ENCODE measurements at regions of chr7 and their contacts with region 1.

Region 1: GRCh38 chr7:108497082-108497725 is 28.7 kb downstream of the PNPLA8 start:
- DNase-seq: peak in 12 of 14 experiments; percentile 7 to 73 (median 18)
- ATAC-seq: peak; percentile 74
- H3K4me3 ChIP-seq: no peak overlapping the region
- H3K4me3 Mint-ChIP-seq: no peak overlapping the region
- H3K27ac ChIP-seq: no peak overlapping the region
- H3K27ac Mint-ChIP-seq: no peak overlapping the region
- H3K4me1 ChIP-seq: no peaks in the 10 kb centered on the region
- H3K4me1 Mint-ChIP-seq: no peaks in the 10 kb centered on the region
- H3K27me3 ChIP-seq: no peaks in the 10 kb centered on the region
- H3K27me3 Mint-ChIP-seq: no peaks in the 10 kb centered on the region
- CTCF ChIP-seq: peak; percentile 97

Region 2: DNA sequence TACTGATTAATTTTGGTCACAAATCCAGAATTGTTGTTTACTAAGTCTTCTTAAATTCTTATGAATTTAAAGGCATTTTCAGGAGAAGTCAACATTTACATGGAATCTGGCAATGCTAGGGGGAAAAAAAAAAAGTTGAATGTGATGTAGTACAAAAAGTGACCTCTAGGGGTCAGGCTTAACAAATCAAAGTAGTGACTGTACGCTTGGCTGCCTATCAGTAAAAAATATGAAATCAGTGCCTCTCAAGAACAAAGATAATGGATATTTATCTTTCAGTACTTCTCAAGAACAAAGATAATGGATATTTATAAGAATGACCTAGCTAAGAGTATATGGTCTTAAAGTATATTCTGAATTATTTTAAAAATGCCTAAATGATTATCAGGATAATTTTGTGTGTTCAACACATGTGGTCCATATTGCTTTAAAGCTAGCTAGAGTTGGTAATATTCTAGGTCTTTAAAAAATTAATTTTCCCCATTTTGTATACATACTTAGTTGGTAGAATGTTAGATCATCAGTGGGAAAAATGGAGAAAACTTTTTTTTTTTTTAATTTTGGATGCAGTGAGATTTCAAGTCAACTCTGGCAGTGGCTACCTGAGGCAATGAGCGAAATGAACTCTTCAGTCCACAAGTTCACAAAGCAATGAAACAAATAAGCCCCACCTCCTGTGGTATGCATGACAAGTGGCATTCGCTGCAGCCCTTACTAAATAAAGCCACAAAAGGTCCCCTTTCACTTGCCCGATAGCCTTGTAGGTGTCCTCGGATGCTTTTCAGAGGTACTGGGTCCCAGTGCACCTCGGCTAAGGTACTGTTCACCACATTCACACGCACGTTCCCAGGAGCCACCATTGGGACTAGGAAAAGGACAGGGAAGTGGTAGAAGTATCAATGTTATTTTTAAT is 315.9 kb before region 1 on chr7:
- CTCF ChIA-PET with region 1: interaction called, 5 read pairs
- POLR2A ChIA-PET with region 1: no interaction called
- intact Hi-C with region 1: loop called (anchors 1 to 2 kb)
- DNase-seq: peak in 3 of 14 experiments; percentile 40 to 65 (median 59)
- ATAC-seq: peak; percentile 62
- H3K4me3 ChIP-seq: no peak overlapping the region
- H3K4me3 Mint-ChIP-seq: no peak overlapping the region
- H3K27ac ChIP-seq: no peak overlapping the region
- H3K27ac Mint-ChIP-seq: no peak overlapping the region
- H3K4me1 ChIP-seq: no peaks in the 10 kb centered on the region
- H3K4me1 Mint-ChIP-seq: no peaks in the 10 kb centered on the region
- H3K27me3 ChIP-seq: no peaks in the 10 kb centered on the region
- H3K27me3 Mint-ChIP-seq: peaks cover 5% of the 10 kb centered on the region
- CTCF ChIP-seq: peak; percentile 87

Region 3: DNA sequence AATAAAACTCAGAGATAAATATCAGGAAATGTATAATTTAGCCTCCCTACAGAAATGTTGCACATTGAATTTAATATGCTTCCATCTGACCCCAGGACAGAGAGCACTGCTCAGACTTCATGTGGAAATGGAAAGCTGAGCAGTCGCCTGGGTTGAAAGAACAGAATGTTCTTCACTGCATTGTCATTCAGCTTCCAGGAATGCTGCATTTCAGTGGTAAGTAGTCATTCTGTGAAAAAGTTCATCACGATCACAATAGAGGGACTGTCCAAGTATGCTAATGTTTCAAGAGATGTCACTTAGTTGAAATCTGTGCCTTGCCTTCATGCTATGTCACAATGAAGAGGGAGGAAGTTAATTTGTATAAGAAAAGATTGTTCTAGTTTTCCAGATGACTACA is 188.3 kb before region 1 on chr7:
- CTCF ChIA-PET with region 1: no interaction called
- POLR2A ChIA-PET with region 1: no interaction called
- intact Hi-C with region 1: no loop called
- DNase-seq: no peak
- ATAC-seq: no peak
- H3K4me3 ChIP-seq: no peak overlapping the region
- H3K4me3 Mint-ChIP-seq: no peak overlapping the region
- H3K27ac ChIP-seq: no peak overlapping the region
- H3K27ac Mint-ChIP-seq: no peak overlapping the region
- H3K4me1 ChIP-seq: no peaks in the 10 kb centered on the region
- H3K4me1 Mint-ChIP-seq: no peaks in the 10 kb centered on the region
- H3K27me3 ChIP-seq: no peaks in the 10 kb centered on the region
- H3K27me3 Mint-ChIP-seq: peaks cover 3% of the 10 kb centered on the region
- CTCF ChIP-seq: no peak

Region 4: GRCh38 chr7:108452722-108453121 is 44.5 kb before region 1 on chr7:
- CTCF ChIA-PET with region 1: interaction called, 9 read pairs
- POLR2A ChIA-PET with region 1: interaction called, 7 read pairs
- intact Hi-C with region 1: loop called (anchors 1 to 2 kb)
- DNase-seq: peak in 3 of 14 experiments; percentile 4 to 54 (median 47)
- ATAC-seq: peak; percentile 67
- H3K4me3 ChIP-seq: no peak overlapping the region
- H3K4me3 Mint-ChIP-seq: peak overlapping the region; percentile 85
- H3K27ac ChIP-seq: no peak overlapping the region
- H3K27ac Mint-ChIP-seq: no peak overlapping the region
- H3K4me1 ChIP-seq: peaks cover 14% of the 10 kb centered on the region
- H3K4me1 Mint-ChIP-seq: peaks cover 23% of the 10 kb centered on the region
- H3K27me3 ChIP-seq: peaks cover 16 to 46% of the 10 kb centered on the region in 2 experiments
- H3K27me3 Mint-ChIP-seq: peaks cover 71% of the 10 kb centered on the region
- CTCF ChIP-seq: peak; percentile 67

Region 5: DNA sequence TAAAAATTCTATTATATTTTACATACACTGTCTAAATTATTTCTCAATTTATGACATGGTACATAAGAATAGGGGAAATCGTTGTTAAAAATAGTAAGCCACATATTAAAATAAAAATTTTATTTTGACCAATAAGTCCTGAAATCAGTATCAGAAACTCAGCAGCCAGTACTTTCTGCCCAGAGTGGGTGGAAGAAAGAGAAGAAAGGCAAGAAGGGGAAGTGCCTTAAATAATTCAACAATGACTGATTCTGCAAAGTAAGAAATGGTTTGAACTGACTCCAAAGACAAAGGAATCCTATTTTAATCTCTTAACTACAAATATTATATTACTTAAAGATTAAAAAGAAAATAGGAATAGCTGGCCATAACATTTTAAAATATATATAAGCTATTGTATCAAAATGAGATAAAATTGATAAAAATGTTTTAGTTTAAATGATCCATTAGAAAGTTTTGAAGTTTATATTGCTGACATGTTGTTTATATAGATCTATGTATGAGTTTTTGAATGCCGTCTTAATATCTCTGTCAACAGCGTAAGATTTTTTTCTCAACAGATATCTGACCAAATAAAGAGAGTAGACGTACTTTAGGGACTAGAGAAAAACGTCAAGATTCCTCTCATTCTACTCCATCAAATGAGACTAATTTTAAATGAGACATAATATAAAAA is 10.8 kb before region 1 on chr7:
- CTCF ChIA-PET with region 1: interaction called, 12 read pairs
- POLR2A ChIA-PET with region 1: no interaction called
- intact Hi-C with region 1: no loop called
- DNase-seq: no peak
- ATAC-seq: no peak
- H3K4me3 ChIP-seq: no peak overlapping the region
- H3K4me3 Mint-ChIP-seq: no peak overlapping the region
- H3K27ac ChIP-seq: no peak overlapping the region
- H3K27ac Mint-ChIP-seq: no peak overlapping the region
- H3K4me1 ChIP-seq: no peaks in the 10 kb centered on the region
- H3K4me1 Mint-ChIP-seq: no peaks in the 10 kb centered on the region
- H3K27me3 ChIP-seq: no peaks in the 10 kb centered on the region
- H3K27me3 Mint-ChIP-seq: no peaks in the 10 kb centered on the region
- CTCF ChIP-seq: no peak

Region 6: GRCh38 chr7:108525985-108526767 is 29.0 kb after region 1 on chr7 and contains the start of gene PNPLA8:
- CTCF ChIA-PET with region 1: interaction called, 10 read pairs
- POLR2A ChIA-PET with region 1: interaction called, 4 read pairs
- intact Hi-C with region 1: no loop called
- DNase-seq: peak; percentile 99 to 100 (median 100)
- ATAC-seq: peak; percentile 88
- H3K4me3 ChIP-seq: peak within 1 kb of the TSS; percentile 88
- H3K4me3 Mint-ChIP-seq: peak within 1 kb of the TSS; percentile 91
- H3K27ac ChIP-seq: peak within 1 kb of the TSS; percentile 92 to 99
- H3K27ac Mint-ChIP-seq: peak within 1 kb of the TSS; percentile 96
- H3K4me1 ChIP-seq: peaks cover 21% of the 10 kb centered on the region
- H3K4me1 Mint-ChIP-seq: peaks cover 49% of the 10 kb centered on the region
- H3K27me3 ChIP-seq: no peaks in the 10 kb centered on the region
- H3K27me3 Mint-ChIP-seq: no peaks in the 10 kb centered on the region
- CTCF ChIP-seq: no peak
- total RNA-seq, gene PNPLA8: 85.9 to 88.6 TPM

Region 7: DNA sequence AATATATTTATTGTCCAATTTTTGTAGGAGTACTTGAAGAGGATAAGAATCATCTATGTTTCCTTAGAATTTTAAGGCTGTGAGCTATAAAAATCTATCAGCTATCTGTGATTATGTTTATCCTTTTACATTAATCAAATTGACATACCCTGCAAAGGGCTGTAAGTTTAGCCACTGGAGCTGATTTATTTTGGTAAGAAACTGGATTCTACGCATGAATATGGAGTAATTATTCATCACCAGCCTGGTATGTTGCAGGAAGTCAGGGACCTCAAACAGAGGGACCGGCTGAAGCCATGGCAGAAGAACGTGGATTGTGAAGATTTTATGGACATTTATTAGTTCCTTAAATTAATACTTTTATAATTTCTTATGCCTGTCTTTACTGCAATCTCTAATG is 769.4 kb after region 1 on chr7:
- CTCF ChIA-PET with region 1: no interaction called
- POLR2A ChIA-PET with region 1: no interaction called
- intact Hi-C with region 1: no loop called
- DNase-seq: no peak
- ATAC-seq: no peak
- H3K4me3 ChIP-seq: no peak overlapping the region
- H3K4me3 Mint-ChIP-seq: no peak overlapping the region
- H3K27ac ChIP-seq: no peak overlapping the region
- H3K27ac Mint-ChIP-seq: no peak overlapping the region
- H3K4me1 ChIP-seq: no peaks in the 10 kb centered on the region
- H3K4me1 Mint-ChIP-seq: no peaks in the 10 kb centered on the region
- H3K27me3 ChIP-seq: no peaks in the 10 kb centered on the region
- H3K27me3 Mint-ChIP-seq: no peaks in the 10 kb centered on the region
- CTCF ChIP-seq: no peak